CD4-positive, alpha-beta memory T cell (primary cell): ENCODE measurements at regions of chr17 and their contacts with region 1.

Region 1: GRCh38 chr17:54220829-54221228 is 398.1 kb downstream of the KIF2B start:
- DNase-seq: no peak
- H3K4me3 ChIP-seq: no peak overlapping the region
- H3K4me3 Mint-ChIP-seq: no peak overlapping the region
- H3K27ac ChIP-seq: no peak overlapping the region
- H3K27ac Mint-ChIP-seq: no peak overlapping the region
- H3K4me1 ChIP-seq: no peaks in the 10 kb centered on the region
- H3K4me1 Mint-ChIP-seq: no peaks in the 10 kb centered on the region
- H3K27me3 ChIP-seq: no peaks in the 10 kb centered on the region
- H3K27me3 Mint-ChIP-seq: no peaks in the 10 kb centered on the region

Region 2: DNA sequence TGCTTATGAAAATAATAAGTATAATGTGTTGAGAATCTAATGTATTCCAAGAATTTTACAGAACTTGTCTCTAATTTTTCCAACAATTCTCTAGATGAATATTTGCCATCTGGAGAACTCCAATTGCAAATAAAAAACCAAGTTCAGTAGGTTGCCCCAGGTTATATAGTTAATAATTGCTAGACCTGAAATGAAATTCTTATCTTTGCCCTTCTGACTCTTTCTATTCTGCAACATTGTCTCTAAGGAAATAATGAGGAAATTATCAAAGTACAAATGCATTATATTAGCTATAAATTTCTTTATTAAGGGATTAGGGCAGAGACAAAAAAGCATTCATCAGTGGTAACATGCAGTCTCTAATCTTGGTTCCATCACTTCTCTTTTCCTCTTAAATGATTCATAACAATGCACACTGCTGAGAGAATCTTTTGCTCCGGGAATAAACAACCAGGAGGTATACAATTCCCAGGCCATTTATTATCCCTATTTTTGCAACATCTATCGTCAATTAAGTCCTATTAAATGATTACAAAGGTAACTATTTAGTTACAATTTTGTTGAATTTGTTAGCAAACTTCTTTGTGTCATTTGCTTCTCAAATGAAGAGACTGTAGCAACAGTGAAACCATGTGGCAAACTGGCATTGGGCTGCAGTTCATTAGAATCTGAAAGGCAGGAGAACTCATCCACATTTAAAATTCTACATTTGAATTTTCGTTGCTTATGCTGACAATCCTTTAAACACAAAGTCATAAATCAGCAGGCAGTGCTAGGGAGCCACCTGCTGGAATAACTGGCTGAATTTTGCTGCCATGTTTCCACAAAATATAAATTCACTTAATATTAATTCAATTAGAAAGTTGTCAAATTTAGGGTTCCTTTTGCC is 48.5 kb before region 1 on chr17:
- CTCF ChIA-PET with region 1: no interaction called
- POLR2A ChIA-PET with region 1: no interaction called
- intact Hi-C with region 1: loop called (anchors 10 kb)
- DNase-seq: no peak
- H3K4me3 ChIP-seq: no peak overlapping the region
- H3K4me3 Mint-ChIP-seq: no peak overlapping the region
- H3K27ac ChIP-seq: no peak overlapping the region
- H3K27ac Mint-ChIP-seq: no peak overlapping the region
- H3K4me1 ChIP-seq: no peaks in the 10 kb centered on the region
- H3K4me1 Mint-ChIP-seq: no peaks in the 10 kb centered on the region
- H3K27me3 ChIP-seq: no peaks in the 10 kb centered on the region
- H3K27me3 Mint-ChIP-seq: no peaks in the 10 kb centered on the region